HepG2 (cell line): ENCODE measurements at regions of chr5 and their contacts with region 1.

Region 1: GRCh38 chr5:35369965-35370790 is 139.9 kb upstream of the PRLR start:
- DNase-seq: no peak
- ATAC-seq: no peak
- H3K4me3 ChIP-seq: no peak overlapping the region
- H3K27ac ChIP-seq: no peak overlapping the region
- H3K4me1 ChIP-seq: no peaks in the 10 kb centered on the region
- H3K27me3 ChIP-seq: no peaks in the 10 kb centered on the region; a peak in 1 of 5 replicates
- CTCF ChIP-seq: no peak
- EP300 ChIP-seq: no peak
- POLR2A ChIP-seq: no peak
- RAD21 ChIP-seq: no peak

Region 2: GRCh38 chr5:35598707-35599370 is 228.7 kb after region 1 on chr5:
- CTCF ChIA-PET with region 1: no interaction called
- POLR2A ChIA-PET with region 1: no interaction called
- in situ Hi-C with region 1: no loop called
- intact Hi-C with region 1: loop called (anchors 2 kb)
- DNase-seq: peak; percentile 62
- ATAC-seq: peak; percentile 95
- H3K4me3 ChIP-seq: no peak overlapping the region
- H3K27ac ChIP-seq: no peak overlapping the region
- H3K4me1 ChIP-seq: no peaks in the 10 kb centered on the region
- H3K27me3 ChIP-seq: no peaks in the 10 kb centered on the region
- CTCF ChIP-seq: peak; percentile 79
- EP300 ChIP-seq: no peak
- POLR2A ChIP-seq: no peak
- RAD21 ChIP-seq: peak; percentile 65; the same call in 1 of the 2 replicates